CD4-positive, alpha-beta memory T cell (primary cell): ENCODE measurements at regions of chr4 and their contacts with region 1.

Region 1: GRCh38 chr4:83110223-83110945 is 4.1 kb downstream of the PLAC8 start:
- DNase-seq: peak; percentile 84 to 90 (median 87)
- H3K4me3 ChIP-seq: peak overlapping the region; percentile 60 to 75
- H3K4me3 Mint-ChIP-seq: peak overlapping the region; percentile 93 to 98 (median 95)
- H3K27ac ChIP-seq: peak overlapping the region; percentile 58
- H3K27ac Mint-ChIP-seq: peak overlapping the region; percentile 90 to 98 (median 96)
- H3K4me1 ChIP-seq: peaks cover 56% of the 10 kb centered on the region
- H3K4me1 Mint-ChIP-seq: peaks cover 27 to 70% (median 46%) of the 10 kb centered on the region in 4 donors
- H3K27me3 ChIP-seq: no peaks in the 10 kb centered on the region
- H3K27me3 Mint-ChIP-seq: no peaks in the 10 kb centered on the region

Region 2: DNA sequence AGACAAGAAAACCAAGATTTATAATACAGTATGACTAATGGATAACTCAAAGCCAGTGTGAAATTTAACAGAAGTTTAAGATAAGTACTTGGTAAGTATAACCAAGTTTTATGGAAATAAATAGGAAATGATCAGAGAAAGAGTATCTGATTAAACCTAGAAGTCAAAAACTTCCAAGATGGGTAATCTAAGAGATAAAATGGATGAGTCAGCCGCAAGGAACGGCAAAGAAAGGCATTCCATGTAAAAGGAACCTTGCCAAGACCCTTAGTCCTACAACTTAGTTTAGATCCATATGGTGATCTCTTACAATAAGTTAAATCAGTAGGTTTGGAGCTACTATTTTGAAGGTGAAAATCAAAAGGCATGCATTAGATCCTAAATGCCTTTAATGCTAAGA is 134.6 kb before region 1 on chr4:
- CTCF ChIA-PET with region 1: no interaction called
- POLR2A ChIA-PET with region 1: no interaction called
- intact Hi-C with region 1: no loop called
- DNase-seq: no peak
- H3K4me3 ChIP-seq: no peak overlapping the region
- H3K4me3 Mint-ChIP-seq: no peak overlapping the region
- H3K27ac ChIP-seq: no peak overlapping the region
- H3K27ac Mint-ChIP-seq: no peak overlapping the region
- H3K4me1 ChIP-seq: no peaks in the 10 kb centered on the region
- H3K4me1 Mint-ChIP-seq: peaks cover 0 to 5% (median 0%) of the 10 kb centered on the region in 4 donors
- H3K27me3 ChIP-seq: no peaks in the 10 kb centered on the region
- H3K27me3 Mint-ChIP-seq: no peaks in the 10 kb centered on the region

Region 3: GRCh38 chr4:83034630-83035494 is 75.5 kb before region 1 on chr4 and contains the start of gene COPS4:
- CTCF ChIA-PET with region 1: interaction called, 3 read pairs
- POLR2A ChIA-PET with region 1: interaction called, 11 read pairs
- intact Hi-C with region 1: no loop called
- DNase-seq: peak; percentile 93 to 99 (median 98)
- H3K4me3 ChIP-seq: peak within 1 kb of the TSS; percentile 76 to 84
- H3K4me3 Mint-ChIP-seq: peak within 1 kb of the TSS; percentile 98 to 100 (median 100)
- H3K27ac ChIP-seq: peak within 1 kb of the TSS; percentile 85
- H3K27ac Mint-ChIP-seq: peak within 1 kb of the TSS; percentile 94 to 100 (median 99)
- H3K4me1 ChIP-seq: peaks cover 25% of the 10 kb centered on the region
- H3K4me1 Mint-ChIP-seq: peaks cover 15 to 41% (median 25%) of the 10 kb centered on the region in 4 donors
- H3K27me3 ChIP-seq: no peaks in the 10 kb centered on the region
- H3K27me3 Mint-ChIP-seq: no peaks in the 10 kb centered on the region
- total RNA-seq, gene COPS4: 24.6 to 26.1 TPM

Region 4: GRCh38 chr4:83097018-83097417 is 13.4 kb before region 1 on chr4:
- CTCF ChIA-PET with region 1: interaction called, 27 read pairs
- POLR2A ChIA-PET with region 1: interaction called, 10 read pairs
- intact Hi-C with region 1: loop called (anchors 2 kb)
- DNase-seq: no peak
- H3K4me3 ChIP-seq: no peak overlapping the region
- H3K4me3 Mint-ChIP-seq: peak overlapping the region in 3 of 8 donors; percentile 22 to 37 (median 31)
- H3K27ac ChIP-seq: no peak overlapping the region
- H3K27ac Mint-ChIP-seq: peak overlapping the region in 5 of 7 donors; percentile 14 to 78 (median 44)
- H3K4me1 ChIP-seq: peaks cover 36% of the 10 kb centered on the region
- H3K4me1 Mint-ChIP-seq: peaks cover 27 to 69% (median 43%) of the 10 kb centered on the region in 4 donors
- H3K27me3 ChIP-seq: no peaks in the 10 kb centered on the region
- H3K27me3 Mint-ChIP-seq: no peaks in the 10 kb centered on the region

Region 5: GRCh38 chr4:83212041-83212851 is 101.9 kb after region 1 on chr4:
- CTCF ChIA-PET with region 1: interaction called, 125 read pairs
- POLR2A ChIA-PET with region 1: interaction called, 130 read pairs
- intact Hi-C with region 1: loop called (anchors 1 kb)
- DNase-seq: peak; percentile 84 to 93 (median 90)
- H3K4me3 ChIP-seq: peak overlapping the region in 1 of 2 donors; percentile 22
- H3K4me3 Mint-ChIP-seq: peak overlapping the region; percentile 50 to 88 (median 74)
- H3K27ac ChIP-seq: peak overlapping the region; percentile 45
- H3K27ac Mint-ChIP-seq: peak overlapping the region; percentile 45 to 99 (median 96)
- H3K4me1 ChIP-seq: peaks cover 80% of the 10 kb centered on the region
- H3K4me1 Mint-ChIP-seq: peaks cover 57 to 80% (median 68%) of the 10 kb centered on the region in 4 donors
- H3K27me3 ChIP-seq: no peaks in the 10 kb centered on the region
- H3K27me3 Mint-ChIP-seq: no peaks in the 10 kb centered on the region

Region 6: DNA sequence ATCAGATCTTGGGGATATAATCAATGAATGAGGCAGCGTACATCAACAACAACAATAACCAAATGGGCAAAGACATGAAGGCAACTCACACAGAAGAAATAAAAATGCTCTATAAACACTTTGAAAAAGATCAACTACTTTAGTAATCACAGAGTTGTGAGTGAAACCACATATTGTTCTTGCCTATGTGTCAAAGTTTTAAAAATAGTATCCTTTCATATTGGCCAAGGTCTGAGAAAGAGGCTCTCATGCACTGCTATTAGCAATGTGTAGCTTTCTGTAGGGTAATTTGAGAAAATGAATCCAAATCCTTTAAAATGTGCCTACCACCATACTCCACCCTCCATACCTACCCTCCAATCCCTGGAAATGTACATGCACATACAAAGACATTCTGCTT is 149.2 kb after region 1 on chr4:
- CTCF ChIA-PET with region 1: interaction called, 108 read pairs
- POLR2A ChIA-PET with region 1: interaction called, 4 read pairs
- intact Hi-C with region 1: loop called (anchors 1 kb)
- DNase-seq: no peak
- H3K4me3 ChIP-seq: no peak overlapping the region
- H3K4me3 Mint-ChIP-seq: no peak overlapping the region
- H3K27ac ChIP-seq: no peak overlapping the region
- H3K27ac Mint-ChIP-seq: no peak overlapping the region
- H3K4me1 ChIP-seq: peaks cover 6% of the 10 kb centered on the region
- H3K4me1 Mint-ChIP-seq: peaks cover 0 to 5% (median 3%) of the 10 kb centered on the region in 4 donors
- H3K27me3 ChIP-seq: no peaks in the 10 kb centered on the region
- H3K27me3 Mint-ChIP-seq: no peaks in the 10 kb centered on the region